ENCODE measurements at regions of chr3 and their contacts with region 1.

Region 1: GRCh38 chr3:98649118-98649517 is 55.7 kb upstream of the CPOX start:
- DNase-seq: no peak
- ATAC-seq: no peak
- H3K4me3 ChIP-seq: no peak overlapping the region
- H3K27ac ChIP-seq: no peak overlapping the region
- H3K4me1 ChIP-seq: no peaks in the 10 kb centered on the region
- H3K27me3 ChIP-seq: peaks cover 6% of the 10 kb centered on the region; the same call in 1 of the 2 replicates
- CTCF ChIP-seq: no peak

Region 2: DNA sequence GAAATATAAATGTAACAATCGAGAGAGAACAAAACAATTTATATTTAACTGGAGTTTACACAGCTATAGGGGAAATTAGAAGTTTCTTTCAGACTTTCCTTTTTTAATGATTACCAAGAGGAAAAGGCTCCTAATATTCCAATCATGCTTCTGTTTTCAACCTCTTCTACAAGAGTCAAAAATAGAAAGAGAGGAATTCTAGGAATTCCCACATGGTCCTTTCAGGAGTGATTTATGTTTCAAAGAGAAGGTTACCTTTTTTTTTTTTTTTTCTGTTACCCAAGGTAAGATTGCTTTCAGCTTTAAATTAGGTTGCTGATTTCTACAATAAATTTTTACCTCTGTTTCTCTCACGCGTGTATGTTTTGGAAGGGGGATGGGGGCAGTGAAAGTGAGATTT is 607.7 kb after region 1 on chr3:
- CTCF ChIA-PET with region 1: interaction called, 11 read pairs
- POLR2A ChIA-PET with region 1: no interaction called
- in situ Hi-C with region 1: no loop called
- intact Hi-C with region 1: no loop called
- DNase-seq: no peak
- ATAC-seq: no peak
- H3K4me3 ChIP-seq: no peak overlapping the region
- H3K27ac ChIP-seq: no peak overlapping the region
- H3K4me1 ChIP-seq: no peaks in the 10 kb centered on the region
- H3K27me3 ChIP-seq: no peaks in the 10 kb centered on the region
- CTCF ChIP-seq: no peak